ENCODE measurements at regions of chr9 and their contacts with region 1.

Region 1: GRCh38 chr9:33159760-33160127 is 7.4 kb downstream of the B4GALT1 start:
- DNase-seq: peak; percentile 53
- H3K4me3 Mint-ChIP-seq: peak overlapping the region; percentile 66
- H3K27ac Mint-ChIP-seq: peak overlapping the region; percentile 94
- H3K4me1 Mint-ChIP-seq: peaks cover 86% of the 10 kb centered on the region
- H3K27me3 Mint-ChIP-seq: no peaks in the 10 kb centered on the region

Region 2: DNA sequence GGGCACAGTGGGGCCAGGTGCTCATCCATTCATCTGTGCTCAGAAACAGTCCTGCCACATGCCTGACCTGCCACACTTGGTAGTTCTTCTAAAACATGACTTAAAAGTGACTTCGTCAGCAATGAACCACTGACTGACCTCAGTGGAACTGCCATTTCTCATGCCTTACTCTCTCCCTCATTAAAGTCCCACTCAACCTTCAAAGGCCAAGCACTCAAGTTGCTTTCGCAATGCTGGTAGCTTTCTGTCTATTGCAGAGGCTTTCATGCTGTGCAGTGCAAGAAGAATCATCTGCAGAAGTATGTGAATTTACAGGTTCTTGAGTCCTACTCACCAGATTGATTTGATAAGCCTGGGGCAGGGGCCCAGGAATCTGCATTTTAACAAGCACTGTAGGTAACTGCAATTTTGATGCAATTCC is 16.5 kb before region 1 on chr9:
- CTCF ChIA-PET with region 1: interaction called, 14 read pairs
- POLR2A ChIA-PET with region 1: no interaction called
- DNase-seq: no peak
- H3K4me3 Mint-ChIP-seq: peak overlapping the region; percentile 8
- H3K27ac Mint-ChIP-seq: peak overlapping the region; percentile 78
- H3K4me1 Mint-ChIP-seq: peaks cover 66% of the 10 kb centered on the region
- H3K27me3 Mint-ChIP-seq: no peaks in the 10 kb centered on the region

Region 3: GRCh38 chr9:33170464-33171415 is 11.0 kb after region 1 on chr9:
- CTCF ChIA-PET with region 1: interaction called, 12 read pairs
- POLR2A ChIA-PET with region 1: no interaction called
- DNase-seq: peak; percentile 45
- H3K4me3 Mint-ChIP-seq: no peak overlapping the region
- H3K27ac Mint-ChIP-seq: no peak overlapping the region
- H3K4me1 Mint-ChIP-seq: peaks cover 26% of the 10 kb centered on the region
- H3K27me3 Mint-ChIP-seq: no peaks in the 10 kb centered on the region